A549 (cell line): ENCODE measurements at regions of chr5 and their contacts with region 1.

Region 1: DNA sequence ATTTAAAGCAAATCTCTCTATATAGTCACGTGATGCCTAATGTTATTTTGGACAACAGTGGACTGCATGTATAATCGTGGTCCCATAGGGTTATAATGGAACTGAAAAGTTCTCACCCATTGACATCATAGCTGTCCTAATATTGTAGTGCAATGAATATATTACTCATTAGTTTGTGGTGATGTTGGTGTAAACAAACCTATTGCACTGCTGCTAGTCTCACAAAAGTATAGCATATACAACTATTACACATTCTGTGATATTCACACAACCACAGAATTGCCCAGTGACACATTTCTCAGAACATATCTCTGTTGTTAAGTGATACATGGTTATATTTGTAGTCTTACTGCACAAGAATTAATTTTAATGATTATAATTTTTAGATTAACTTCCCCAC is 37.7 kb downstream of the IPO11 start:
- DNase-seq: no peak
- ATAC-seq: no peak
- H3K4me3 ChIP-seq: no peak overlapping the region
- H3K27ac ChIP-seq: no peak overlapping the region
- H3K4me1 ChIP-seq: no peaks in the 10 kb centered on the region
- CTCF ChIP-seq: no peak
- EP300 ChIP-seq: no peak
- POLR2A ChIP-seq: no peak
- RAD21 ChIP-seq: no peak

Region 2: GRCh38 chr5:62256161-62257019 is 193.9 kb before region 1 on chr5:
- CTCF ChIA-PET with region 1: no interaction called
- POLR2A ChIA-PET with region 1: no interaction called
- DNase-seq: no peak
- ATAC-seq: no peak
- H3K4me3 ChIP-seq: no peak overlapping the region
- H3K27ac ChIP-seq: no peak overlapping the region
- H3K4me1 ChIP-seq: no peaks in the 10 kb centered on the region
- CTCF ChIP-seq: no peak
- EP300 ChIP-seq: no peak
- POLR2A ChIP-seq: no peak
- RAD21 ChIP-seq: no peak

Region 3: GRCh38 chr5:62460578-62460983 is 10.3 kb after region 1 on chr5:
- CTCF ChIA-PET with region 1: interaction called, 14 read pairs
- POLR2A ChIA-PET with region 1: no interaction called
- DNase-seq: peak; percentile 17 to 51
- ATAC-seq: peak; percentile 78 to 81
- H3K4me3 ChIP-seq: no peak overlapping the region
- H3K27ac ChIP-seq: no peak overlapping the region
- H3K4me1 ChIP-seq: peaks cover 3% of the 10 kb centered on the region; the same call in 1 of the 3 replicates
- CTCF ChIP-seq: peak; percentile 84
- EP300 ChIP-seq: no peak
- POLR2A ChIP-seq: no peak
- RAD21 ChIP-seq: peak; percentile 65 to 81

Region 4: GRCh38 chr5:62661126-62661525 is 210.9 kb after region 1 on chr5:
- CTCF ChIA-PET with region 1: no interaction called
- POLR2A ChIA-PET with region 1: no interaction called
- DNase-seq: no peak
- ATAC-seq: peak; percentile 19 to 45; a peak in 3 of 6 replicates
- H3K4me3 ChIP-seq: no peak overlapping the region
- H3K27ac ChIP-seq: no peak overlapping the region
- H3K4me1 ChIP-seq: no peaks in the 10 kb centered on the region
- CTCF ChIP-seq: no peak
- EP300 ChIP-seq: no peak
- POLR2A ChIP-seq: no peak
- RAD21 ChIP-seq: no peak